Mammary epithelial cell (primary cell): ENCODE measurements at regions of chr12 and their contacts with region 1.

Region 1: GRCh38 chr12:77324763-77325468 is 259.5 kb upstream of the E2F7 start:
- DNase-seq: peak; percentile 71
- H3K4me3 ChIP-seq: peak overlapping the region; percentile 69 to 96 (median 74)
- H3K27ac ChIP-seq: peak overlapping the region; percentile 29
- H3K4me1 ChIP-seq: peaks cover 21% of the 10 kb centered on the region
- H3K27me3 ChIP-seq: no peaks in the 10 kb centered on the region
- CTCF ChIP-seq: peak; percentile 40 to 68

Region 2: GRCh38 chr12:76898442-76898841 is 426.5 kb before region 1 on chr12:
- CTCF ChIA-PET with region 1: no interaction called
- dilution Hi-C with region 1: no loop called
- in situ Hi-C with region 1: no loop called
- intact Hi-C with region 1: no loop called
- DNase-seq: no peak
- H3K4me3 ChIP-seq: no peak overlapping the region
- H3K27ac ChIP-seq: no peak overlapping the region
- H3K4me1 ChIP-seq: no peaks in the 10 kb centered on the region
- H3K27me3 ChIP-seq: no peaks in the 10 kb centered on the region
- CTCF ChIP-seq: no peak

Region 3: GRCh38 chr12:77065361-77066204 is 259.3 kb before region 1 on chr12 and contains the start of gene E2F7:
- CTCF ChIA-PET with region 1: no interaction called
- dilution Hi-C with region 1: no loop called
- in situ Hi-C with region 1: loop called in 1 of 2 experiments (anchors 5 kb)
- intact Hi-C with region 1: loop called (anchors 5 kb)
- DNase-seq: peak; percentile 96
- H3K4me3 ChIP-seq: peak within 1 kb of the TSS; percentile 69 to 94 (median 81)
- H3K27ac ChIP-seq: peak within 1 kb of the TSS; percentile 96
- H3K4me1 ChIP-seq: peaks cover 8% of the 10 kb centered on the region
- H3K27me3 ChIP-seq: no peaks in the 10 kb centered on the region
- CTCF ChIP-seq: no peak
- total RNA-seq, gene E2F7: 5.7 to 35.4 TPM

Region 4: DNA sequence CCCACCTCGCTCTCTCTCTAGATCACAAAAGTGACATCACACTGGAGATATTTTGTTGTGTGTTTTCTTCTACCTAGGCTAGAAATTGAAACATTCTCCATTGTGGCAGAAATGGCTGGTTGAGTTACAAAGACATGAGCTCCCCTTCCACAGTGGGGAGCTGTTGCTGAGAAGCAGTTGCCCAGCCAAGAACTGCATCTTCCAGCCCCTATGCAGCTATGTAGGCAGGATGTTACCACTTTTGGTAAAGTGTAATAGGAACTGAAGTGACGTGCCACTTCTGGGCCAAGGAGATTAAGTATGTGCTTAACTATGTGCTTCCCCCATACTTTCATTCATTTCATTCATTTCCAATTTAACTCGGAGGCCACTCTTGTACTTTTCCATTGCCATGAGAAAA is 120.8 kb before region 1 on chr12:
- CTCF ChIA-PET with region 1: no interaction called
- dilution Hi-C with region 1: no loop called
- in situ Hi-C with region 1: no loop called
- intact Hi-C with region 1: loop called (anchors 5 kb)
- DNase-seq: no peak
- H3K4me3 ChIP-seq: no peak overlapping the region
- H3K27ac ChIP-seq: no peak overlapping the region
- H3K4me1 ChIP-seq: peaks cover 3% of the 10 kb centered on the region
- H3K27me3 ChIP-seq: no peaks in the 10 kb centered on the region
- CTCF ChIP-seq: peak; percentile 11 to 39

Region 5: DNA sequence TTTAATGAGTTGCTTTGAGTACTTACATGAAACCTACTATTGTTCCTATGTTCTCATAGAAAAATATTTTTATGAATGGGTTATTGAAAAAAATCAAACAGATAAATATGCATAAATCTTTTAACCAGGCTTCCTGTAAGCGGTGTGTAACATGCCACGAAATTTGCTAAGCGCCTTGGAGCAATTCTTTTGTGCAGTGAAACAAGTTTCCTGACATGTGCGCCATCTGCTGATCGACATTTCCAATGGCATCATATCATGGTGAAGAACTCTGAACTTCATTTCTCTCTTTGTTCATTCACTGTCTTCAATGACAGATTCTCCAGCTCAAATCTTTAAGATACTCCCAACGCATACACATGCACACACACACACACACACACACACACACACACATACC is 360.2 kb after region 1 on chr12:
- CTCF ChIA-PET with region 1: no interaction called
- dilution Hi-C with region 1: no loop called
- in situ Hi-C with region 1: no loop called
- intact Hi-C with region 1: loop called (anchors 1 kb)
- DNase-seq: peak; percentile 60
- H3K4me3 ChIP-seq: peak overlapping the region in 1 of 3 experiments; percentile 25
- H3K27ac ChIP-seq: no peak overlapping the region
- H3K4me1 ChIP-seq: peaks cover 3% of the 10 kb centered on the region
- H3K27me3 ChIP-seq: no peaks in the 10 kb centered on the region
- CTCF ChIP-seq: peak; percentile 62 to 77

Region 6: GRCh38 chr12:77925536-77926108 is 600.7 kb after region 1 on chr12:
- CTCF ChIA-PET with region 1: no interaction called
- dilution Hi-C with region 1: no loop called
- in situ Hi-C with region 1: no loop called
- intact Hi-C with region 1: loop called (anchors 10 kb)
- DNase-seq: peak; percentile 77
- H3K4me3 ChIP-seq: no peak overlapping the region
- H3K27ac ChIP-seq: no peak overlapping the region
- H3K4me1 ChIP-seq: peaks cover 5% of the 10 kb centered on the region
- H3K27me3 ChIP-seq: no peaks in the 10 kb centered on the region
- CTCF ChIP-seq: peak; percentile 98 to 99